Caco-2 (cell line): ENCODE measurements at regions of chr4 and their contacts with region 1.

Region 1: DNA sequence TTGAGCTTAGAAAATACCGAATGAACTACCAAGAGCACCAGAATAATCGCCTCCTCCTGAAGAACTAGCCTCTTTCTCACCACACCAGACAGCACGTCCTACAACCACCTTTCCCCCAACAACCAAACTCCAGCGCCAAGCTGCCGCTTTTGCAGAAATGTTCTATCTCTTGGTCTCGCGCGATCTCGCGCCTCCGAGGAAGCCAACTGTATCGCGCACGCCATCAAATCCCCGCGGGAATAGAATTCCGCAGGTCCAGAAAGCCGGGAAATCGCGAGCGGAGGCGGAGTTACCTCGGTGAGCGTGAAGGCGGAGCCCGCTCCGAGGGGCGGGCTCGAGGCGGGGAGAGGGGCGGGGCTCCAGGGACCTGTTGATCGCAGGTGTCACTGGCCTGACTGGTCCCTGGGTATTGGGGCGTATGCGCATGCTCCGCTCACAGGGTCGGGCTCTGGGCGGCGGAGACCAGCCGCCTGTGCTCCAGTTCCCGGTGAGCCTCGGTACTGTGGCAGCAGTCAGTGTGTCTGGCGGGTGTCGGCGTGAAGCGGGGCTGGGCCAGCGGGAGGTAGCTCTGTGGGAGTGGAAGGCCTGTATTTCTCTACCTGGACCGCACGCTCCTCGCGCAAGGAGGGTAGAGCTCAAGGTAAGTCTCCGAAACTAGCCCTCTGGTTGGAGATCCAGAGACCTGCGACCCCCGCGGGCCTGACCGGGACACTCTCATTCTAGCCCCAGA is at the start of gene USP53:
- DNase-seq: peak; percentile 98 to 99
- H3K4me3 ChIP-seq: peak within 1 kb of the TSS; percentile 77
- H3K4me3 Mint-ChIP-seq: peak within 1 kb of the TSS; percentile 95
- H3K27ac Mint-ChIP-seq: peak within 1 kb of the TSS; percentile 99
- H3K4me1 ChIP-seq: peaks cover 12% of the 10 kb centered on the region
- H3K4me1 Mint-ChIP-seq: peaks cover 28% of the 10 kb centered on the region
- H3K27me3 ChIP-seq: no peaks in the 10 kb centered on the region
- H3K27me3 Mint-ChIP-seq: no peaks in the 10 kb centered on the region
- CTCF ChIP-seq: no peak
- total RNA-seq, gene USP53: 45.3 and 49.3 TPM in 2 replicates

Region 2: DNA sequence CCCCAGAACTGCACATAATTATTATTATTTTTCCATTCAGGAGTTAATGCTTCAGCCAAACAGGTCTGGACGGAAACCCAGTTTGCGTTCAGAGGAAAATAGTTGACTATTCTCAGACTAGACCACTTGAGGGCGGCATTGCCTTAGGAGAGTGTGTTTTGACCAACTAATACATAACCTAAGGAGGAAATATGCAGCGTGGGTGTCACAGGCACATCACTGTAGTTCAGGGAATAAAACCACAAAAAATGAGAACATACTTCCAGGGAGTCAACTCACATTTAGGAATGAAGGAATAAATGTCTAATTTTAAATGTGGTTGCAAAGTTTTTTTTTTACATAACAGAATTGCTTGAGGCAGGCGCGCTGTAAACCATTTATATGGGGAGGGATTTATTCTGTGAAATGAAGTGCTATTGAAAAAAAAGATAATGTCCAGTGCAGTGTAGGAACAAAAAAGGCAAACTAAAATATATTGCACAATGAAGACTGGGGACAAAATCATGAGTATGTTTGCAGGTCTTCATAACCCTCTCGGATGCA is 230.5 kb before region 1 on chr4:
- CTCF ChIA-PET with region 1: no interaction called
- POLR2A ChIA-PET with region 1: no interaction called
- intact Hi-C with region 1: loop called (anchors 2 kb)
- DNase-seq: peak; percentile 52 to 70
- H3K4me3 ChIP-seq: no peak overlapping the region
- H3K4me3 Mint-ChIP-seq: no peak overlapping the region
- H3K27ac Mint-ChIP-seq: no peak overlapping the region
- H3K4me1 ChIP-seq: no peaks in the 10 kb centered on the region
- H3K4me1 Mint-ChIP-seq: no peaks in the 10 kb centered on the region
- H3K27me3 ChIP-seq: no peaks in the 10 kb centered on the region
- H3K27me3 Mint-ChIP-seq: no peaks in the 10 kb centered on the region
- CTCF ChIP-seq: peak; percentile 62 to 75

Region 3: GRCh38 chr4:119041951-119042560 is 170.3 kb before region 1 on chr4:
- CTCF ChIA-PET with region 1: interaction called, 18 read pairs
- POLR2A ChIA-PET with region 1: interaction called, 7 read pairs
- intact Hi-C with region 1: loop called (anchors 1 kb)
- DNase-seq: peak; percentile 72 to 78
- H3K4me3 ChIP-seq: no peak overlapping the region
- H3K4me3 Mint-ChIP-seq: no peak overlapping the region
- H3K27ac Mint-ChIP-seq: no peak overlapping the region
- H3K4me1 ChIP-seq: peaks cover 10% of the 10 kb centered on the region
- H3K4me1 Mint-ChIP-seq: peaks cover 20% of the 10 kb centered on the region
- H3K27me3 ChIP-seq: no peaks in the 10 kb centered on the region
- H3K27me3 Mint-ChIP-seq: no peaks in the 10 kb centered on the region
- CTCF ChIP-seq: peak; percentile 62 to 77

Region 4: DNA sequence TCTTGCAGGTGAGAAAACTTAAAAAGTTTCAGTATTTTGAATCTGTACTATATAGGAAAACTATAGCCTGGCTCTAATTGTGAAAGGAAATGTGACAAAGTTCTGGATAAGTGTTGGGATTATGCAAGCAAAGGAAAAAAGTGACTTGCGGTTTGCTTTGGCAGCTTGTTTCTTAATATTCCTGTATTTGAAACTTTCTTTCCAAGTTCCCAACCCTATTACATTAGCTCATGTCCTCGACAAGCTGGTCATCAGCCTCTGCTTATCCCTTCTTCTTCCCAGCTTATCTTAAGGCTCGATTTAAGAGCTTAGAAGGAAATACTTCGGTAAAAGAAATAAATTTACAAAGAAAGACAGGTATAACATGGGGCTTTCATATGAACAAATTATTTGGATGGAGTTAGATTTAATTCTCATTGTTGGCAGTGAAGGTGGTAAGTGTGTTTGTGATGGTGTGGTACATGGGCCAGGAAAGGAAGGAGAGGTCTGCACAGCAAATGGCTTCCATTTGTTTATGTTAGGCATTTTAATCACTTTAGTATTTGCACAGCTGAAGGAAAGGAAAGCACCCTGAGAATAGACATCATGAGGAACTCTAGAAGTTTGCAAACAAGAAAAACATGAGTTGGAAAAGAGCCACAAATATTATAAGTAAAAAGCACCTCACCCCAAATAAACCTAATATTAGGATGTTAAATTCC is 81.9 kb before region 1 on chr4:
- CTCF ChIA-PET with region 1: no interaction called
- POLR2A ChIA-PET with region 1: no interaction called
- intact Hi-C with region 1: loop called (anchors 2 kb)
- DNase-seq: no peak
- H3K4me3 ChIP-seq: no peak overlapping the region
- H3K4me3 Mint-ChIP-seq: peak overlapping the region; percentile 69
- H3K27ac Mint-ChIP-seq: peak overlapping the region; percentile 96
- H3K4me1 ChIP-seq: peaks cover 34% of the 10 kb centered on the region
- H3K4me1 Mint-ChIP-seq: peaks cover 44% of the 10 kb centered on the region
- H3K27me3 ChIP-seq: no peaks in the 10 kb centered on the region
- H3K27me3 Mint-ChIP-seq: no peaks in the 10 kb centered on the region
- CTCF ChIP-seq: no peak

Region 5: GRCh38 chr4:119138046-119138445 is 74.4 kb before region 1 on chr4:
- CTCF ChIA-PET with region 1: interaction called, 11 read pairs
- POLR2A ChIA-PET with region 1: interaction called, 17 read pairs
- intact Hi-C with region 1: loop called (anchors 1 kb)
- DNase-seq: peak in 1 of 2 experiments; percentile 33
- H3K4me3 ChIP-seq: no peak overlapping the region
- H3K4me3 Mint-ChIP-seq: no peak overlapping the region
- H3K27ac Mint-ChIP-seq: peak overlapping the region; percentile 70
- H3K4me1 ChIP-seq: peaks cover 60% of the 10 kb centered on the region
- H3K4me1 Mint-ChIP-seq: peaks cover 50% of the 10 kb centered on the region
- H3K27me3 ChIP-seq: no peaks in the 10 kb centered on the region
- H3K27me3 Mint-ChIP-seq: no peaks in the 10 kb centered on the region
- CTCF ChIP-seq: no peak

Region 6: DNA sequence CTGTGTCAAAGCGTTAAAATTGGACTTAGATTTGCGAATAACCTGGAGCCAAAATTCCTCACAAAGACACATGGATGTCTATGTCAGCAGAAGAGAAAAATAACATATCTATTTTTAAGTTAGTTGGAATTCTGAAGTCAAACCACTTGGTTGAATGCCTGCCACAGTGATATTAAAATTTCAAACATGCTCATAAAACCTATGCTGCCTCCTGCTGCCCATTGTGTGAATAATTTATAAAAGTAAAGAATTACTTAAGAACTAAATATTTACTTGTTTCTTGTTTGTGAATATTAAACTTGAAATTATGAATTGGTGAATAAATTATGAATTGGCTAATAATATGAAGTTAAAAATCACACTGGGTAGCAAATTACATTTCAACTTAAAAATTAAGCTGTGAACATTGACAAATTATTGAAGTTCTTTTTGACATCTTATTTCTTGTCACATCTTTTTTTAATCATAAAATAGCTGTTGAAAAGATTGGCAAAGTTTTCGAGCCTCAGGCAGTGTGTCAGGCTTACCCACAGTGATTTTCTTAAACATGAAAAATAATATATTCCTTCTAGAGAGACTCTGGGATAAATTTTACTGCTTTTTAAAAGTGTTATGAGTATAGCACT is 74.1 kb after region 1 on chr4:
- CTCF ChIA-PET with region 1: no interaction called
- POLR2A ChIA-PET with region 1: no interaction called
- intact Hi-C with region 1: loop called (anchors 5 kb)
- DNase-seq: no peak
- H3K4me3 ChIP-seq: no peak overlapping the region
- H3K4me3 Mint-ChIP-seq: no peak overlapping the region
- H3K27ac Mint-ChIP-seq: no peak overlapping the region
- H3K4me1 ChIP-seq: peaks cover 10% of the 10 kb centered on the region
- H3K4me1 Mint-ChIP-seq: peaks cover 19% of the 10 kb centered on the region
- H3K27me3 ChIP-seq: no peaks in the 10 kb centered on the region
- H3K27me3 Mint-ChIP-seq: no peaks in the 10 kb centered on the region
- CTCF ChIP-seq: peak; percentile 34 to 52